ENCODE measurements at regions of chr1 and their contacts with region 1.

Region 1: DNA sequence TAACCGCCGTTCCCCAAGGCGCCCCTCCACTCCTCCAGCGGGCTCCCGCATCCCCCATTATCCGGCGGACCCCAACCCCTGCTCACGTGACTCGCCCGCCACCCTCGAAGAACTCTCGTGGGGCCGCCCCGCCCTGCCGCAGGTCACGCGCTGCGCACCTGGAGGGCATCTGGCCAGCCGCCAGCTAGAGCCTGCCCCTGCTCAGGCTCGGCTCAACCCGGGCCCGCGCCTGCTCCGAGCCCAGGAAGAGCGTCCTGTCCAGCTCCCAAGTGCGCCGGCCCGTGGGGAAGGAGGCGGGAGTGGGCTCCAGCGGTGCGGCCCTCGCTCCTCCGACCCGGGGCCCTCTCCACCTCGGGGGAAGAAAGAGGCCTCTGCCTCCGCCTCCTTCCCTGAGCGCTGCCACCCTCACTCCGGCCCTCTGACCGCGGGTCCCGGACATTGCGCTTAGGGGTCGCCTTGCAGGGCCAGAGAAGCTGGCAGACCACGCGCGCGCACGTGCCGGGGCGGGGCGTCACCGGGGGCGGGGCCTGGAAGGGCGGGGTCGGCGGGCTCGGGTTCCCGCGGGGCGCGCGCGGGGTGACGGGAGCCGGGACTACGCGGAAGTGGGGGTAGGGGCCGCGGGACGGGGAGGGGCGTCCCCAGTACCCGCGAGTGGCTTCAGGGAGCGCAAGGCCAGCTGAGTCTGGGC is 28.4 kb downstream of the HMGN2 start:
- DNase-seq: peak; percentile 75
- H3K4me3 ChIP-seq: peak overlapping the region; percentile 57 to 82 (median 60)
- H3K27ac ChIP-seq: peak overlapping the region; percentile 40
- H3K4me1 ChIP-seq: peaks cover 12% of the 10 kb centered on the region
- H3K27me3 ChIP-seq: no peaks in the 10 kb centered on the region
- CTCF ChIP-seq: no peak
- POLR2A ChIP-seq: no peak

Region 2: GRCh38 chr1:26472901-26473845 is 27.5 kb before region 1 on chr1:
- CTCF ChIA-PET with region 1: interaction called, 8 read pairs
- POLR2A ChIA-PET with region 1: interaction called, 4 read pairs
- dilution Hi-C with region 1: no loop called
- intact Hi-C with region 1: loop called (anchors 2 kb)
- DNase-seq: peak; percentile 95
- H3K4me3 ChIP-seq: peak overlapping the region; percentile 82 to 98 (median 98)
- H3K27ac ChIP-seq: peak overlapping the region; percentile 31
- H3K4me1 ChIP-seq: peaks cover 11% of the 10 kb centered on the region
- H3K27me3 ChIP-seq: no peaks in the 10 kb centered on the region
- CTCF ChIP-seq: no peak
- POLR2A ChIP-seq: peak; percentile 14

Region 3: DNA sequence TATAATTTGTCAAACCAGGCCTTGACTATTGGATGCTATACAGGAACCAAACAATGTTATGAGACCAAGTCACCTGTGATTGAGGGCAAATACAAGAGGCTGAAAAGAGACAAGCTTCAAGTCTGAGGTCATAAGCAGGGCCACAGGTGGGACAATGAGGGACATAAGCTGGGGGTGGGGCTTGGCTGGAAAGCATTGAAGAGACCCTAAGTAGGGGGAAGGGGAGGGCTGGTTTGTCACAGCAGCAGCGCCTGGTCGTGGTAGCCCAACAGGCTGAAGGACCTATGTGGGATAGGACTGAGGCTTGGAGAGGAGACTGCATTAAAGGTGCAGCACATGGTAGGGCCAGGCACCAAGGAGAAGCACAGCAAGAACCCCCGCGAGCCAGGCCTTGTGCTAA is 10.5 kb before region 1 on chr1:
- CTCF ChIA-PET with region 1: interaction called, 11 read pairs
- POLR2A ChIA-PET with region 1: no interaction called
- dilution Hi-C with region 1: no loop called
- intact Hi-C with region 1: no loop called
- DNase-seq: no peak
- H3K4me3 ChIP-seq: no peak overlapping the region
- H3K27ac ChIP-seq: no peak overlapping the region
- H3K4me1 ChIP-seq: no peaks in the 10 kb centered on the region
- H3K27me3 ChIP-seq: peaks cover 1 to 2% of the 10 kb centered on the region in 2 experiments
- CTCF ChIP-seq: no peak
- POLR2A ChIP-seq: no peak

Region 4: DNA sequence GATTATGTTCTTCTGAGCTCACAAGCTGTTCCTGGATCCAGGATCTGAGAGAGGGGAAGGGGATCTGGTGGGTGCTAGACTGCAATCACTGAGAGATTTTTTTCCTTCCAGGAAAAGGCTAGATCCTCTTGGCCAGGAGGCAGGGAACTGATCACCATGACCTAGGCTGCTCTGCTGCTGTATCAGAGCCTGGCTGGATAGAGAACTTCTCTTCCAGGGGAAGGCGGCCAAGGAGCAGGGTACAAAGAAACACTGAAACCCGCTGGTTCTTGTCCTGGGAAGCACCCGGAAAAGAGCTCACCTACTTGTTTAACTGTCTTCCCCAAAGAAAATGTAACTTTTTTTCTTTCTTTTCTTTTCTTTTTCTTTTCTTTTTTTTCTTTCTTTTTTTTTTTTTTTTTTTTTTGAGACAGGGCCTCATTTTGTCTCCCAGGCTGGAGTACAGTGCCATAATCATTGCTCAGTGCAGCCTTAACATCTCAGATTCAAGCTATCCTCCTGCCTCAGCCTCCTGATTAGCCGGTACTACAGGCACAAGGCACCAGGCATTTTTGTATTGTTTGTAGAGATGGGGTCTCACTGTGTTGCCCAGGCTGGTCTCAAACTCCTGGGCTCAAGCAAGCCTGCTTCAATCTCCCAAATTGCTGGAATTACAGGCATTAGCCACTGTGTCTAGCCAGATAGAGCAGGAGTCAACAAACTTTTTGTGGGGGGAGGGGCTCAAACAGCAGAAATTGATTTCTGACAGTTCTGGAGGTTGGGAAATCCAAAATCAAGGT is 16.5 kb after region 1 on chr1:
- CTCF ChIA-PET with region 1: interaction called, 11 read pairs
- POLR2A ChIA-PET with region 1: no interaction called
- dilution Hi-C with region 1: no loop called
- intact Hi-C with region 1: no loop called
- DNase-seq: no peak
- H3K4me3 ChIP-seq: no peak overlapping the region
- H3K27ac ChIP-seq: no peak overlapping the region
- H3K4me1 ChIP-seq: no peaks in the 10 kb centered on the region
- H3K27me3 ChIP-seq: peaks cover 4 to 5% of the 10 kb centered on the region in 2 experiments
- CTCF ChIP-seq: no peak
- POLR2A ChIP-seq: no peak

Region 5: GRCh38 chr1:26529655-26530409 is 29.2 kb after region 1 on chr1 and contains the start of gene RPS6KA1:
- CTCF ChIA-PET with region 1: interaction called, 16 read pairs
- POLR2A ChIA-PET with region 1: no interaction called
- dilution Hi-C with region 1: no loop called
- intact Hi-C with region 1: no loop called
- DNase-seq: peak; percentile 44
- H3K4me3 ChIP-seq: peak within 1 kb of the TSS; percentile 50 to 70 (median 60)
- H3K27ac ChIP-seq: peak within 1 kb of the TSS; percentile 49
- H3K4me1 ChIP-seq: peaks cover 10% of the 10 kb centered on the region
- H3K27me3 ChIP-seq: no peaks in the 10 kb centered on the region
- CTCF ChIP-seq: no peak
- POLR2A ChIP-seq: peak; percentile 61
- total RNA-seq, gene RPS6KA1: 13.3 and 15.5 TPM in 2 replicates

Region 6: DNA sequence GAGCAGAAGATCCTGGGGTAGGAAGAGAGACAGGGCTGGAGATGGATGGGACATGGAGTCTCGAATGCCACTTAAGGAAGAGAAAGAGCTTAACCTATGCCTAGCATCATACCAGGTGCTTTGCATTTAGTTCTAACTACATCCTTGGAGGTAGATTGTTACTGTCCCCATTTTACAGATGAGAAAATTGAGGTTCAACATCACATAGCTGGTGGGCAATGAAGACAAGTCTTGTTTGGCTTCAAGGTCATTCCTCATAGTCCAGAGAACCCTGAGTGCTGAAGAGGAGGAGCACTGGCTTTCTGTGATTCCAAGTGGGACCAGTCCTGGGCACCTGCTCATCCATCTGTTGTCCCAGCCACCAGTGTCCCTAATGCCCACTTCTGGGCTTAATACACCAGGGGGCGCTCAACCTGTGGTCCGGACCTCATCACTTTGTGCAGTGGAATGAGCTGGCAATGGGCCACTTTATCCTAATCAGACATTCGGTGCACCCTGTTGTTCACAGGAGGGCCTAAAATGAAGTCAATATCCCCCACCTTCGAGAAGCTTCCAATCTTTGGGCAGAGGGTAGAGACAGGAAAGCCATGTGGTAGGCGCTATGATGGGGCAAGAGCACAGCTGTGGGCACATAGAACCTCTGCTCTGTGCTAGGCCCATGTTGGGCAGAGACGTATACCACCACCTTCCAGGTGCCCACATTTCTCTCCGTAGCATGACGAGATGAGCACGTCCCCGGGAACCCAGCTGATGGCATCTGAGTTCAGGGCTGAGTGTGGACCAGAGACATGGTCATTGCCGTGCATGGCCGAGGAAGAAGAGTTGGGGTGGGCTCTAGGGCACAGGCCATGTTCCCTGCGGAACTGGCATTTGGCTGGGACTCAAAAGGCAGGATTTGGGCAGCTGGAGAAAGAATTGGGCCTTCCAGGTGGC is 38.1 kb after region 1 on chr1:
- CTCF ChIA-PET with region 1: interaction called, 13 read pairs
- POLR2A ChIA-PET with region 1: no interaction called
- dilution Hi-C with region 1: no loop called
- intact Hi-C with region 1: no loop called
- DNase-seq: peak; percentile 33
- H3K4me3 ChIP-seq: no peak overlapping the region
- H3K27ac ChIP-seq: no peak overlapping the region
- H3K4me1 ChIP-seq: peaks cover 2% of the 10 kb centered on the region
- H3K27me3 ChIP-seq: no peaks in the 10 kb centered on the region
- CTCF ChIP-seq: peak; percentile 62 to 73
- POLR2A ChIP-seq: no peak

Measured in endothelial cell of umbilical vein (primary cell).